ENCODE measurements at regions of chr12 and their contacts with region 1.

Region 1: DNA sequence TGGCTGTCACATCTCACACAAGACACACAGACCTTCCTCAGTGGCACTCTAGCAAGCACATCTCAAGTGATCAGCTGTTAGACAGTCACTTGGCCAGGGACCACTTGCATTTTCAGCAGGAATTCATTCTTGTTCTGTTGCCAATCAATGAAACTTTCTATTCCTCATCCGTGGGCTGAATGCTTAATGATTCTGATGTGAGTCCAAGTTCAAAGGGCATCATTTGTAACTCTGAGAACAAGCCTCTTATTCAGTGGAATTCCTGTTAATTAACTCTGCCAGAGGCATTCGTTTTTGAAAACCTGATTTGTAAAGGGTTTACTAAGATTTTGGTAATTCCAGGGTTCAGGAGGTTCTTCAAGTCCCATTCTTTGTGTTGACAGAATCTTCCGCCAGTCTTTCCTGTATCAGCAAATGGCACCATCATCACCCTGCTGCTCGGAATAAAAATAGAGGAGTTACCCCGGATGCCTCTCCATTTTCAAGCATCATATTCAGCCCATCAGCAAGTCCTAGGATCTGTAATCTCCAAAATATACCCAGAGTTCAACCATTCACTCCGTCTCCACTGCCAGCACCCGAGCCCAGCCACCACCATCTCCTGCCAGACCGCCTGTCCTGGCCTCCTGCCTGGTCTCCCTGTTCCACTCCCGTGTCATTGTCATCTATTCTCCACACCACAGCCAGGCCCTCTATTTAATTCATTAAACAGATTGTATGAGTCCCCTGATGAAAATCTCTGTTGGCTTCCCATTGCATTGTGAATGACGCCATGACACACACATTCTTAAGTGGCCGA is 473.4 kb downstream of the AACS start:
- DNase-seq: no peak
- H3K4me3 ChIP-seq: no peak overlapping the region
- H3K27ac ChIP-seq: no peak overlapping the region
- H3K4me1 ChIP-seq: no peaks in the 10 kb centered on the region
- H3K27me3 ChIP-seq: no peaks in the 10 kb centered on the region
- CTCF ChIP-seq: no peak
- POLR2A ChIP-seq: no peak

Region 2: GRCh38 chr12:125882141-125882540 is 343.5 kb after region 1 on chr12:
- intact Hi-C with region 1: loop called (anchors 5 kb)
- DNase-seq: no peak
- H3K4me3 ChIP-seq: no peak overlapping the region
- H3K27ac ChIP-seq: no peak overlapping the region
- H3K4me1 ChIP-seq: no peaks in the 10 kb centered on the region
- H3K27me3 ChIP-seq: no peaks in the 10 kb centered on the region
- CTCF ChIP-seq: no peak
- POLR2A ChIP-seq: no peak

Measured in breast epithelium (tissue), 4 donors.